Common myeloid progenitor, CD34-positive (primary cell): ENCODE measurements at regions of chr2 and their contacts with region 1.

Region 1: GRCh38 chr2:174663550-174663949 is 65.9 kb upstream of the WIPF1 start:
- DNase-seq: peak in 2 of 3 donors; percentile 55 to 69
- H3K4me3 ChIP-seq: peak overlapping the region in 3 of 7 experiments; percentile 2 to 30 (median 13)
- H3K27ac ChIP-seq: peak overlapping the region in 1 of 2 experiments; percentile 22
- H3K4me1 ChIP-seq: peaks cover 9 to 63% (median 48%) of the 10 kb centered on the region in 4 experiments
- H3K27me3 ChIP-seq: no peaks in the 10 kb centered on the region

Region 2: GRCh38 chr2:174593574-174594203 is 69.9 kb before region 1 on chr2:
- CTCF ChIA-PET with region 1: interaction called, 13 read pairs
- POLR2A ChIA-PET with region 1: no interaction called
- DNase-seq: peak; percentile 87 to 94 (median 93)
- H3K4me3 ChIP-seq: peak overlapping the region in 6 of 7 experiments; percentile 39 to 88 (median 58)
- H3K27ac ChIP-seq: peak overlapping the region; percentile 76 to 99
- H3K4me1 ChIP-seq: peaks cover 63 to 95% (median 80%) of the 10 kb centered on the region in 4 experiments
- H3K27me3 ChIP-seq: no peaks in the 10 kb centered on the region

Region 3: DNA sequence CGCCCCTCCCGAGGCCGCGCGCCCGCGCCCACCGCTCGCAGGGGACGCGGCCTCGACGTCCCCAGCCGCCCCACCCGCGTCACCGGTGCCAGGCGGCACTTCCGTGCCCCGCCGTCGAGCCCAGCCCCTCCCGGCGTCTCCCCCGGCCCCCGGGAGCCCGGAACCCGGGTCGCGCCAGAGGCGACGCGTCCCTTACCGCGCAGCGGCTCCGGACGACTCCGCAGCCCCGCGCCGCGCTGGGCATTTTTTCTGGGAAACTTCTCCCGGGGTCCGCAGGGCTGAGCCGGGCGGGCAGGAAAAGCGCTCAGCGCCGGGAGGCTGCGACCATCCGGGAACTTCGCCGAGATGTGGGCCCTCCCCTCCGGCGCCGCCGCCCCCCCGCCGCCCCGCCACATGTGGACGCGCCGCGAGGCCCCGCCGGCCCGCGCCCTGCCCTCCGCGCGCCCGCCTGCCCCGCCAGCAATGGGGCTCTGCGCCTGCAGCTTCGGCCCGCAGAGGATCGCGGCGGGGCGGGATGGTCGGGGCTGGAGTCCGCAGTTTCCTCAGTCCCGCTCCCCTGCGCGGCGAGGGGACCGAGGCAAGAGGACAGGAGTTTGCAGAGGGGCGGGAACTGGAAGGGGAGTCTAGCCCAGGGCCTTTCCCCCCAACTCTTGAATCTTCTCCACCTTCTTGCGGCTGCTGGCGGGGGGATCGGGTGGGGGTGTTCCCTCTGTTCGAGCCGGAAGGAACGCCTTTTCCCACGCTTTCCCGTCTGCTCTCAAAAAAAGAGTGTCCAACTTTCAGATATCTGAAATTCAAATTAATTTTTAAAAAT is 19.2 kb after region 1 on chr2:
- CTCF ChIA-PET with region 1: interaction called, 46 read pairs
- POLR2A ChIA-PET with region 1: interaction called, 3 read pairs
- DNase-seq: peak; percentile 25 to 65 (median 51)
- H3K4me3 ChIP-seq: peak overlapping the region; percentile 66 to 88 (median 81)
- H3K27ac ChIP-seq: peak overlapping the region in 1 of 2 experiments; percentile 49
- H3K4me1 ChIP-seq: peaks cover 0 to 28% (median 14%) of the 10 kb centered on the region in 4 experiments
- H3K27me3 ChIP-seq: no peaks in the 10 kb centered on the region

Region 4: GRCh38 chr2:174688079-174688478 is 24.5 kb after region 1 on chr2:
- CTCF ChIA-PET with region 1: interaction called, 46 read pairs
- POLR2A ChIA-PET with region 1: interaction called, 3 read pairs
- DNase-seq: peak; percentile 45 to 73 (median 72)
- H3K4me3 ChIP-seq: no peak overlapping the region
- H3K27ac ChIP-seq: no peak overlapping the region
- H3K4me1 ChIP-seq: peaks cover 0 to 7% (median 3%) of the 10 kb centered on the region in 4 experiments
- H3K27me3 ChIP-seq: peaks cover 0 to 4% (median 0%) of the 10 kb centered on the region in 5 experiments